ENCODE measurements at regions of chr4 and their contacts with region 1.

Region 1: DNA sequence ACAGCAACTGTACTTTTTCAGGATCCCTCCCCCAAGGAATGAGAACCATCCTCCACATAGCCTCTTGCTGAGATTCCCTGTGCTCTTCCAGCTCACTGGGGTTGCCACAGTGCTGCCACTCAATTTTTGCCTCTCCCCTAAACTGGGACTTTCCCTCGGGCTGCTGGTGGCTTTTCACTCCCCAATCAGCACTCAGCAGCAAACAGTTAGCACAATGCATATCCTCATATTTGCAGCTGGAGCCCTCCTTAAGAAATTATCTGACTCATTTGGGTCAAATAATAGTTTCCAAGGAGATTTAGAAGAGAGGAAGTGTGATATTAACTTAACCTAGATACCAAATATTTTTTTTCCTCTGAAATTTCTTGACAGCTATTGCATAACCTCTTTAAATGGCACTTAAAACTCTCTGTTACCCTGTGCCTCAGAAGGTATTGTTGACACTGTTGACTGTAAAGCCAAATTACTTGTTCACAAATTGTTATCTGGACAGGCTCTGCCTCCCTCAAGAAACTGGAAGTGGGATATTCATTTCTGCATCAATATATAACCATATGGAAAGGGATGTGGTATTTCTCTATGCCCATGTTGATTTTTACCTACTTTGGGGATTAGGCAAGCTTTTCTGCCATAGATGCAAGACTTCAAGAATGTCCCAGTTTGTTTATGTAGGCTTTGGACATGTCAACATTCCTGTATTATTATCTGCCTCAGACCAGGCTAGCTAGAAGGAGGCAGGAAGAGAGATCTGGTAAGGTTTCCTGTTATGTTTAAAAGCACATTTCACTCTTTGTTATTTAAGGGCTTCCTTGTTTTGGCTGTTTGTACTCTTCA is 58.0 kb downstream of the SEPTIN11 start:
- DNase-seq: no peak

Region 2: DNA sequence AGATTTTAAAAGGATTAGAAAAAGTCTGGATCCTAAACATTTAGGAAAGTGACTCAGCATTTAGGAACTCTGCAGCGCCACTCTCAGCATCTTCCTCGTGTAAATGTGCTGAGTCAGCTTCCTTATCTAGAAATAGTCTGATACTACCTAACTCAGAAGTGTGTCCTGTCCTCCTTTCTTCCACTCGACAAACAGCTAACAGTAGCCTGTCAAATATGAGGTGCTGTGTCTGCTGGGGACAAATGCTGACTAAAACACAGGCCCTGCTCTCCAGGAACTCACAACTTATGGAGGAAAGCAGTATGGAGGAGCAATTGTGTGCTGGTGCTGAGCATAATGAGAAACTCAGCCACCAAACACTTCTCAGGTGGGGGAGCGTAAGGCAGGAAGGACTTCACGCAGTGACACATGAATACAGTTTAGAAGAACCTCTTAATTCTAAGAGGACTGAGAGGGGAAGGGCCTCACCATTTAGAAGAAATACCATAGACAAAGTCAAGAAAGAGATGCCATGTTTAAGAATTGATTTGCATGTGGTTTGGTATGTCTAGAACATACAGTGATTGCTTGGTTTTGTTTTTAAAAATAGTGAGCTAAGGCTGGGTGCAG is 235.0 kb before region 1 on chr4:
- intact Hi-C with region 1: loop called in 1 of 2 experiments (anchors 10 kb)
- DNase-seq: no peak

Measured in posterior vena cava (tissue), 2 donors.